ENCODE measurements at regions of chr1 and their contacts with region 1.

Region 1: GRCh38 chr1:30707412-30708360 is 15.7 kb downstream of the MATN1 start:
- DNase-seq: peak; percentile 69 to 91 (median 84)
- H3K4me3 ChIP-seq: no peak overlapping the region
- H3K27ac ChIP-seq: peak overlapping the region in 1 of 59 donors; percentile 44
- H3K27me3 ChIP-seq: no peaks in the 10 kb centered on the region
- CTCF ChIP-seq: peak; percentile 38 to 97 (median 85)

Region 2: DNA sequence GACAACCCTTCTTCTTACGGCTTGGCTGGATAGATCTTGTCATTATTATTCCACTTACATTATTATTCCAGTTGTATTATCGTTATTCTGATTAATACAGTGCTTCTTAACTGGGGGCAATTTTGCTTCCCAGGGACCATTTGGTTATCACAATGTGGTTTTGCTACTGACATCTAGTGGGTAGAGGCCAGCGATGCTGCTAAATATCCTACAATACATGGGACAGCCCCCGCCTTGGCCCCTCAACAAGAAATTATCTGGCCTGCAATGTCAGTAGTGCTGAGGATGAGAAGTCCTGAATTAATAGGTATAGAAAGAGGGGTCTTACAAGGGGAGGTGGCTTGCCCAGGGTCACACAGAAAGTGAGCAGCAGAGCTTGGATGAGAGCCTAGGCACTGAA is 1365.8 kb before region 1 on chr1:
- intact Hi-C with region 1: loop called in 1 of 2 experiments (anchors 10 kb)
- DNase-seq: no peak
- H3K4me3 ChIP-seq: no peak overlapping the region
- H3K27ac ChIP-seq: peak overlapping the region in 6 of 59 donors; percentile 1 to 47 (median 18)
- H3K27me3 ChIP-seq: peaks cover 0 to 9% (median 0%) of the 10 kb centered on the region in 45 donors
- CTCF ChIP-seq: peak in 4 of 56 donors; percentile 1 to 20 (median 11)

Region 3: DNA sequence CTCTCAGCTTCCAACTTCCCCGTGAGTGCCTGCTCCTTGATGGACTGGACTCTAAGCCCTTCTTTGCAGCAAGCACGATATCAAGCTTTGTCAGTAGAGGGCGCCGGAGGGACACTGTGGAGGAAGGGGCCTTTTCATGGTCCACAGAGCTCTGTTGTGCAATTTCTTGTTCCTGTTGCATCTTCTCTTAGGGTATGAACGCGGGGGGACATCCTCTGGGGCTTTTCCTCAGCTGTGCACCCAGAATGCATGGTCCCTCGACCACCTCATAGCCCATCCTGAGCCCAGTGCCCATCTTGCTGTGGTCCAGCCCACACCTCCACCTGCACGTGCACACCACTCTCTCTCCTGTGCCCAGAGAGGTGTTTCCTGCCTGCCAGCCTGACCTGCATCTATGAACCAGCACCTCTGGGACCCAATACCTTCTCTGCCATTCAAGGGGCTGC is 914.6 kb before region 1 on chr1:
- intact Hi-C with region 1: loop called in 1 of 2 experiments (anchors 2 kb)
- DNase-seq: peak in 9 of 10 donors; percentile 51 to 88 (median 76)
- H3K4me3 ChIP-seq: no peak overlapping the region
- H3K27ac ChIP-seq: no peak overlapping the region
- H3K27me3 ChIP-seq: no peaks in the 10 kb centered on the region
- CTCF ChIP-seq: peak; percentile 27 to 83 (median 72)

Region 4: DNA sequence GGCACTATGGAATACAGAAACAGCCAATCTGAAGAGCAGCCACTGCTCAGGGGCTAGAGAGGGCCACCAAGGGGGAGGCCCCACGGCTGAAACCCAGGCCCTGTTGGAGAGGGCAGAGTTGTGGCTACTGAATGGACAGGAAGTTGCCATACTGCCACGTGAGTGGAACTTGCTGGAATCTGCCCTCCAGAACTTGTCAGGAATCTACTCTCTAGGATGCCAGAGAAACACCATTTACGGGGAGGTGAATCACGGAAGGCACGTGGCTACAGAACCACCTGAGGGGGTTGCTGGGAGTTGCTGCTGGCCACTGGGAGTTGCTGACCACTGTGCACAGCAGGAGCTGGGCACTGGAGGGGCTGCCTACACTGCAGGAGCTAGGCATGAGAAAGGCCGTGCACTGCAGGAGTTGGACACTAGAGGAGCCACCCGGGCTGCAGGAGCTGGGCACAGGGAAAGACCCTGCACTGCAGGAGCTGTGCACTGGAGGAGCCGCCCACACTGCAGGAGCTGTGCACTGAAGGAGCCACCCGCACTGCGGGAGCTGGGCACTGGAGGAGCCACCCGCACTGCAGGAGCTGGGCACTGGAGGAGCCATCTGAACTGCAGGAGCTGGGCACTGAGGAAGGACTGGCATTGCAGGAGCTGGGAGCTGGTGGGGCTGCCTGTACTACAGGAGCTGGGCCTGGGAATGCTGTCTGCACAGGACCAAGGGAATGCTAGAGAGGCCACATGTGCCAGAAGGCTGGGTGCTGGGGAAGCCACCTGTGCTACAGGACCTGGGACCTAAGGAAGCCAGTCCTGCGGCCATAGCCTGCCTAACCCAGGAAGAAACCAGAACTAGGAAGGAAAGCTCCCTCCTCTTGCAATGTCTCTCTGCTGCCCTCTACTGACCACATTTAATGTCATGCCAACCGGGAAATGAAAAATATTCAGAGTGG is 327.7 kb before region 1 on chr1:
- intact Hi-C with region 1: loop called in 1 of 2 experiments (anchors 10 kb)
- DNase-seq: peak in 6 of 10 donors; percentile 27 to 67 (median 54)
- H3K4me3 ChIP-seq: no peak overlapping the region
- H3K27ac ChIP-seq: peak overlapping the region in 11 of 59 donors; percentile 0 to 58 (median 26)
- H3K27me3 ChIP-seq: peaks cover 0 to 51% (median 2%) of the 10 kb centered on the region in 45 donors
- CTCF ChIP-seq: peak; percentile 69 to 95 (median 82)

Region 5: GRCh38 chr1:30852026-30852425 is 144.3 kb after region 1 on chr1:
- intact Hi-C with region 1: no loop called
- DNase-seq: no peak
- H3K4me3 ChIP-seq: no peak overlapping the region
- H3K27ac ChIP-seq: peak overlapping the region in 9 of 59 donors; percentile 18 to 56 (median 39)
- H3K27me3 ChIP-seq: no peaks in the 10 kb centered on the region
- CTCF ChIP-seq: no peak

Measured in dorsolateral prefrontal cortex (tissue), 120 donors.